HCT116 (cell line): ENCODE measurements at regions of chr2 and their contacts with region 1.

Region 1: DNA sequence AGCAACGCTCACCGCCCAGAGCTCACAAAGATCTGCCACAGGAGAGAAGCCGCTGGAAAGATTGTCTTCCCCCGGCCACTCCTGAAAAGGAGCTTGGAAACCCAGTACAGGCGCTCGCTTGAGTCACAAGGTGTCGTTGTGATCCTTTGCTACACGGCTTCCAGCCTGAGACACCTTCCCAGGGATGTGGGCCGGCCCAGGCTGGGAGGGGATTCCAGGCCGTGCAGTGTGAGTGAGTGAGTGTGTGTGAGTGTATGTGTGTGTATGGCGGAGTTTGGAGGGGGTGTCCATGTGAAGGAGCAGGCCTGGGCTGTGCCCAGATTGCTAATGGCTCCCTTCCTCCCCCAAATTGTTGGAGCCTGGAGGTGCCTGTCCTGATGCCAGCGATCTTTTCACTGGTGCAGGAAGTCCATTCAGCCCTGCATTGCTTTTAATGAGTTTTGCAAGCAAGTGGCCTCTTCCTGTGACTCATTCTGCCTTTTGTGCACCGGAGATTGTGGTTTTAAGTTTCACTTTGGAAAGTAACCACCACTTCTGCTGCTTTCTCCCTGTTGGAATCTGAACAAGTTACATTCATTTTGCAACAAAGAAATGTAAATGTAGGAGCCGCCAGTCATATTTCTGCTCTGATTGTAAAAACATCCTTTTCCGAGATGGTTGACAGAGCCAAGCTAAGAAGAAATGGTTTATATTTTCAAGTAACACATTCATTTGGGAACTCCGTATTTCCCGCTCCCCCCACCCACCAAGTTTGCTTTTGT is 83.7 kb downstream of the LPIN1 start:
- DNase-seq: peak; percentile 90
- ATAC-seq: peak; percentile 95
- H3K4me3 ChIP-seq: peak overlapping the region; percentile 33 to 50
- H3K27ac ChIP-seq: peak overlapping the region; percentile 96
- H3K4me1 ChIP-seq: peaks cover 27 to 31% of the 10 kb centered on the region in 2 experiments
- H3K27me3 ChIP-seq: no peaks in the 10 kb centered on the region
- CTCF ChIP-seq: peak; percentile 42 to 62 (median 57); a peak in 5 of 6 replicates
- POLR2A ChIP-seq: peak; percentile 35
- RAD21 ChIP-seq: peak; percentile 90

Region 2: GRCh38 chr2:11398747-11399437 is 431.2 kb before region 1 on chr2:
- CTCF ChIA-PET with region 1: no interaction called
- POLR2A ChIA-PET with region 1: no interaction called
- RAD21 ChIA-PET with region 1: no interaction called
- intact Hi-C with region 1: no loop called
- DNase-seq: no peak
- ATAC-seq: no peak
- H3K4me3 ChIP-seq: no peak overlapping the region
- H3K27ac ChIP-seq: no peak overlapping the region
- H3K4me1 ChIP-seq: peaks cover 0 to 5% of the 10 kb centered on the region in 2 experiments; a peak in 1 of 4 replicates
- H3K27me3 ChIP-seq: no peaks in the 10 kb centered on the region
- CTCF ChIP-seq: no peak
- POLR2A ChIP-seq: no peak
- RAD21 ChIP-seq: no peak

Region 3: DNA sequence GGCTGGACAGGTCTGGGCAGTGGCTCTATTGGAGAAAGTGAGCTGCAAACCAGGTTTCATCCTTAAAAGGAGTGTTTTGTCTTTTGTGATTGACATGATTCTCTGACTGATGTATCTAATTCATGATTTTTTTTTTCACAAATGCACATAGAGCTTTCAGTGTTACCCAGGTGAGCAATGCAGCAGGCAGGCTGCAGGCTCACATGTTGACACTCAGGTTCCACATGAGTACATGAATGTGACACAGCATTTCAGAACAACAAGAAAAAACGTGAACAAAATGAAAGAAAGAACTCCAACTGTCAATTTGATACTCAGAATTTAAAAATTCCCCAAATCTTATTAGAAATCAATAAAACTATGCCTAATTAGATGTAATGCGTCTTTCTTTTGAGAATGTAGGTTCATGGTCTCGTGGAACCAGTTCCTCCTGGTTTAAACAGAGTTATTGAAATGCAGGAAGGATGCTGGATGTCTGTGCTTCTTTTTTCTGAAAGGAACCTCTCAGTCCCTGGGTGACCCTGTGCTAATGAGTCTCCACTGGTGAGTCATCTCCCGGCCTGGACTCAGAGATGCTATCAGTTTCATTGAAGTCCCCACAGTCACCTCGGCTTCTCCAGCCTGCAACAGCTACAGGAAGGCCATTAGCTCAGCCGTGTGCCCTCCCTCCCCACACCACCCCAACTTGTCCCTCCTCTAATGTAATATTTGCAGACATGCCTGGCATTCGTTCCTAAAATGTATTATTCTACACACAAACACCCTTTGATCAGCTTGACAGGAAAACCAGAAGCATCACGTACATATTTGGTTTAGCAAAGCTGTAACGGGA is 346.7 kb after region 1 on chr2:
- CTCF ChIA-PET with region 1: interaction called, 4 read pairs
- POLR2A ChIA-PET with region 1: no interaction called
- RAD21 ChIA-PET with region 1: no interaction called
- intact Hi-C with region 1: loop called (anchors 10 kb)
- DNase-seq: no peak
- ATAC-seq: peak; percentile 85
- H3K4me3 ChIP-seq: no peak overlapping the region
- H3K27ac ChIP-seq: no peak overlapping the region
- H3K4me1 ChIP-seq: peaks cover 11 to 12% of the 10 kb centered on the region in 2 experiments; a peak in 3 of 4 replicates
- H3K27me3 ChIP-seq: no peaks in the 10 kb centered on the region
- CTCF ChIP-seq: no peak
- POLR2A ChIP-seq: no peak
- RAD21 ChIP-seq: no peak

Region 4: DNA sequence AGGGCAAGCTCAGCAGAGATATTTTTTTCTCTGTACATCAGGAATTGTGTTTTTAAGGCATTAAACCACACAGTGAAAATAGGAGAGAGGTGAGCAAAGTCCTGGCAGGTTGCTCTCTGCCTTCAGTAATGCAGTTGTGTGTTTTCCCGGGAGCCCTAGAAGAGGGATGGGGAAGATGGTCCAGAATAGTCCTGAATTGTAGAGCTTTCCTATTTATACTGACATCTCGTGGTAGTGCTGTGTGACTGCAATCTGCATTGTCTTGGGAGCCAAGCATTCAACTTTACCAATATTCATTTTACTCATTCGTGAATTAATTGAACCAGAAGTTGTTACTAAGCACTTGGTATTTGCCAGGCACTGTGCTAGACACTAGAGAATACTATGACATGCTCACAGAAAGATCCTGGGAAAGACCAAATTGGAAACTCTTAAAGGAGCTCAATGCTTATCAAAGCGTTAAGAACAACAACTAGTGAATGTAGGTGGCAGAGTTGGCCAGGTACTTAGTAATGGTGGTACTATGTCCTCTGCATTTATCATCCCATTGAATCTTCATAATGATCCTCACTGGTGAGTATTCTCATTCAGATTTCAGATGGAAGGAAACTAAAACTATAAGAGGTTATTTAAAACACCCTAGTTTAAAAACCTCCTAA is 1101.2 kb after region 1 on chr2:
- CTCF ChIA-PET with region 1: no interaction called
- POLR2A ChIA-PET with region 1: no interaction called
- RAD21 ChIA-PET with region 1: no interaction called
- intact Hi-C with region 1: loop called (anchors 1 kb)
- DNase-seq: peak; percentile 28
- ATAC-seq: peak; percentile 95
- H3K4me3 ChIP-seq: no peak overlapping the region
- H3K27ac ChIP-seq: no peak overlapping the region
- H3K4me1 ChIP-seq: peaks cover 0 to 8% of the 10 kb centered on the region in 2 experiments; a peak in 2 of 4 replicates
- H3K27me3 ChIP-seq: no peaks in the 10 kb centered on the region
- CTCF ChIP-seq: peak; percentile 55 to 74 (median 72); a peak in 5 of 6 replicates
- POLR2A ChIP-seq: no peak
- RAD21 ChIP-seq: peak; percentile 76